Activated naive CD4-positive, alpha-beta T cell treated with anti-CD3 and anti-CD28 coated beads, Interleukin-2, amount 10 ng/mL, durations not matched to agents 7 days and 5 days (primary cell): ENCODE measurements at regions of chr14 and their contacts with region 1.

Region 1: GRCh38 chr14:98138666-98139065 is 1133.3 kb downstream of the BCL11B start:
- DNase-seq: peak; percentile 77
- H3K4me3 Mint-ChIP-seq: peak overlapping the region; percentile 74
- H3K27ac Mint-ChIP-seq: peak overlapping the region; percentile 96
- H3K4me1 Mint-ChIP-seq: peaks cover 89% of the 10 kb centered on the region
- H3K27me3 Mint-ChIP-seq: no peaks in the 10 kb centered on the region

Region 2: GRCh38 chr14:97527993-97528392 is 610.7 kb before region 1 on chr14:
- CTCF ChIA-PET with region 1: no interaction called
- DNase-seq: no peak
- H3K4me3 Mint-ChIP-seq: no peak overlapping the region
- H3K27ac Mint-ChIP-seq: no peak overlapping the region
- H3K4me1 Mint-ChIP-seq: peaks cover 10% of the 10 kb centered on the region
- H3K27me3 Mint-ChIP-seq: peaks cover 3% of the 10 kb centered on the region

Region 3: DNA sequence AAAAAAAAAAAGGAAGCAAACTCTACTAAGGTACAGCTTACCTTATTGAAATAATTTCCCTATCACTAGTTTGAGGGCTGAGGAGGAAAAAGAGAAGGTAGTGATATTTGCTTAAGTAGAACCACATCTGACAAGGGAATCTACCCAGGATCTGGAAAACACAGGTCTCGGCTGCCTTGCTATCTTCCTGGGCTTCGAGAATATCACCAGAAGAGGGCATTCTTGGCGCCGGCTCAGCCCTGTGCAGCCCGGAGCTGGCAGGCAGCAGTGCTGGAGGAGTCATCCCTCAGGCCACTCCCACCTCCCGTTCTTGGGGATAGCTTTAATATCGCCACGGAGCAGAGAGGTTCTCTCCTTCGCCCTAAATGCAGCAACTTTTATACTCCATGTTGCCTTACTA is 160.3 kb before region 1 on chr14:
- CTCF ChIA-PET with region 1: interaction called, 105 read pairs
- DNase-seq: peak; percentile 86
- H3K4me3 Mint-ChIP-seq: peak overlapping the region; percentile 89
- H3K27ac Mint-ChIP-seq: peak overlapping the region; percentile 98
- H3K4me1 Mint-ChIP-seq: peaks cover 61% of the 10 kb centered on the region
- H3K27me3 Mint-ChIP-seq: no peaks in the 10 kb centered on the region

Region 4: GRCh38 chr14:98167705-98168104 is 29.0 kb after region 1 on chr14:
- CTCF ChIA-PET with region 1: interaction called, 20 read pairs
- DNase-seq: peak; percentile 67
- H3K4me3 Mint-ChIP-seq: peak overlapping the region; percentile 35
- H3K27ac Mint-ChIP-seq: peak overlapping the region; percentile 85
- H3K4me1 Mint-ChIP-seq: peaks cover 94% of the 10 kb centered on the region
- H3K27me3 Mint-ChIP-seq: no peaks in the 10 kb centered on the region

Region 5: DNA sequence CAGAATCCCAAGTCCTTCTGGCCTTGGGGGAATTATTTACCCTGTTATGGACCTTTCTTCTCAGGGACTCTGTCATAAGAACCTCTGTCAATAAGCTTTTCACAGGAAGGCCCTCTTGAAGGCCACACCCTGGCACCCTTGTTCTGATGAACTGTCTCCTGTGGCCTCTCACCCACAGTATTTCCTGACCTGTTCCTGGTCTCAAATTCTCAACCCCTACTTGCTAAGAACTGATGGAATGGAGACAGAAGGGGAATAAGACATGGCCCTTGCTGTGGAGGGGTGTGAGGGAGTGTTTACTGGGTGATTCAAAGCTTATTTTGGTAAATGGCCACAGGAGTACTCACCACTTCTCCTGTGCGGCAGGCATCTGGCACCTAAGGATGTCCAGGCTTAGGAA is 50.4 kb after region 1 on chr14:
- CTCF ChIA-PET with region 1: interaction called, 43 read pairs
- DNase-seq: peak; percentile 60
- H3K4me3 Mint-ChIP-seq: peak overlapping the region; percentile 54
- H3K27ac Mint-ChIP-seq: peak overlapping the region; percentile 97
- H3K4me1 Mint-ChIP-seq: peaks cover 99% of the 10 kb centered on the region
- H3K27me3 Mint-ChIP-seq: no peaks in the 10 kb centered on the region

Region 6: GRCh38 chr14:98218218-98218617 is 79.6 kb after region 1 on chr14:
- CTCF ChIA-PET with region 1: no interaction called
- DNase-seq: no peak
- H3K4me3 Mint-ChIP-seq: no peak overlapping the region
- H3K27ac Mint-ChIP-seq: no peak overlapping the region
- H3K4me1 Mint-ChIP-seq: peaks cover 39% of the 10 kb centered on the region
- H3K27me3 Mint-ChIP-seq: peaks cover 9% of the 10 kb centered on the region

Region 7: DNA sequence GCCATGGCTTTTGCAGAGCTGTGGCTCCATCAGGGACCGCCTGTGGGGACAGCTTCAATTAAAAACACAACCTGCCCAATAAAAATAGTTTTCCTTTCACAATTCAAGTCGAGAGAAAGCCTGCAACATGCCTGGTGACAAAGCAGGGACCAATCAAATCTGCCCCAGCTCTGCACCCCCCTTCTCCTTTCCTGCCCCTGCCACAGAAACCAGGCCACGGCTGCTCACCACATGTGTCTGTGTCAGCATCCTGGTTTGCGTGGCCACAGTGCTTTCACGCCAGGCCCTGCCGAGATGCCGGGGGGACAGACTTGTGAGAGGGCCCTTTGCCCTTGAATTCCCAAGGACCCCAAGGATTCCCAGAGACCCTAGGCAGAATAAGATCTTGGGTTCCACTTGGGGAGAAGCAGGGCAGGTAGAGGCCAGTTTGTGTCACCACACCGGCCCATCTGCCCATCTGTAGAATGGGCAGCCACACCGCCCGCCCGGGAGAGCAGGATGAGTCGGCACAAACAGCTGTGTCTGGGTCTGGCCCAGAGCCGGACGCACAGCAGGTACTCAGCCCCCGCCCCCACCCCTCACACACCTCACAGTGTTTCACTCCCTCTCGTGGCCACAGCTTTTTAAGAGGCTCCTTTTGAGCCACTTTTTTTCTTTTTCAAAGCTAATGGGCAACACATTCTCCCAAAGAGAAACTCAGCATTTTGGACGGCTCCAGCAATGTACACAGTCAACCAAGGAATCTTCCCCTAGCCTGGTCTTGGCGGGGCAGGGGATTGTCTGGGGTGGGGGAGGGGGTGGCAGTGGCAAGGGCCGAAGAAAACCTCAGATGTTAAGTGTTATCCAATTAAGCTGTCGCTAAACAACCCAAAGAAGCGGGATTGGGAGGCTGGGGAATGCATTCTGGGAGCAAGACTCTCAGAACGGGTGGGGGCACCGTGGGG is 1091.8 kb after region 1 on chr14:
- CTCF ChIA-PET with region 1: interaction called, 14 read pairs
- DNase-seq: peak; percentile 93
- H3K4me3 Mint-ChIP-seq: peak overlapping the region; percentile 74
- H3K27ac Mint-ChIP-seq: peak overlapping the region; percentile 99
- H3K4me1 Mint-ChIP-seq: peaks cover 97% of the 10 kb centered on the region
- H3K27me3 Mint-ChIP-seq: peaks cover 4% of the 10 kb centered on the region